ENCODE measurements at regions of chr10 and their contacts with region 1.

Region 1: GRCh38 chr10:30241422-30242110 is 107.5 kb downstream of the MTPAP start:
- DNase-seq: no peak
- ATAC-seq: no peak
- H3K4me3 Mint-ChIP-seq: no peak overlapping the region
- H3K27ac Mint-ChIP-seq: no peak overlapping the region
- H3K4me1 Mint-ChIP-seq: peaks cover 7% of the 10 kb centered on the region
- H3K27me3 Mint-ChIP-seq: peaks cover 24% of the 10 kb centered on the region

Region 2: DNA sequence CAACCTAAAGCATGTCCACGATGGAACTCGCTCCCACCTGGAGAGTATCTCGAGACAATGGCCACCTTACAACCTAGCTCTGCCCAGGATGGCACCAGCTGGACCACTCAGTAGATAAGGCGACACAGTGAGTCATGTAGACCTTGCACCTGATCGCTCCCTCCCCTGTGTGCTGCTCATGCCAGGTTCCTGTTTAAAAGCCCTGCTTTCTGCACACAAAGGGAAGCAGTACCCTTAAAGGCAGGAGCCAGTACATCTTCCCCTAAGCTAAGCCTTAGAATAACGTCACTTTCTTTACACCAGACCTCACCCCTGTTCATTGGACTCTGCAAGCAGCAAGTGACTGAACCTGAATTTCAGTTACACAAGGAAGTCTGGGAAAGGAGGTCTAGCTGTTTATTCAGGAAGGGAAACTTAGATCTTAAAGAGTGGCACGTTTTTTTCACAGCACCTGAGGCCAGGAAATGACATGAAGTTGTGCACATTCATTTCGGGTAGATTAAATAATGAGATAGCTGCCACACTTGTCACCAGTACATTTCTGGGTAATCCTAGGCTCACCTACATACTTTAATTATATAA is 10.4 kb before region 1 on chr10:
- CTCF ChIA-PET with region 1: interaction called, 21 read pairs
- DNase-seq: peak; percentile 56
- ATAC-seq: peak; percentile 83
- H3K4me3 Mint-ChIP-seq: no peak overlapping the region
- H3K27ac Mint-ChIP-seq: peak overlapping the region; percentile 53
- H3K4me1 Mint-ChIP-seq: peaks cover 22% of the 10 kb centered on the region
- H3K27me3 Mint-ChIP-seq: peaks cover 18% of the 10 kb centered on the region